ENCODE measurements at regions of chr1 and their contacts with region 1.

Region 1: GRCh38 chr1:107430540-107431228 is 289.8 kb downstream of the NTNG1 start:
- DNase-seq: no peak
- ATAC-seq: no peak
- H3K4me3 ChIP-seq: no peak overlapping the region
- H3K27ac ChIP-seq: no peak overlapping the region
- H3K4me1 ChIP-seq: no peaks in the 10 kb centered on the region
- H3K27me3 ChIP-seq: no peaks in the 10 kb centered on the region
- CTCF ChIP-seq: peak in 2 of 3 experiments; percentile 50 to 59; a peak in 4 of 6 replicates
- POLR2A ChIP-seq: no peak
- RAD21 ChIP-seq: no peak

Region 2: DNA sequence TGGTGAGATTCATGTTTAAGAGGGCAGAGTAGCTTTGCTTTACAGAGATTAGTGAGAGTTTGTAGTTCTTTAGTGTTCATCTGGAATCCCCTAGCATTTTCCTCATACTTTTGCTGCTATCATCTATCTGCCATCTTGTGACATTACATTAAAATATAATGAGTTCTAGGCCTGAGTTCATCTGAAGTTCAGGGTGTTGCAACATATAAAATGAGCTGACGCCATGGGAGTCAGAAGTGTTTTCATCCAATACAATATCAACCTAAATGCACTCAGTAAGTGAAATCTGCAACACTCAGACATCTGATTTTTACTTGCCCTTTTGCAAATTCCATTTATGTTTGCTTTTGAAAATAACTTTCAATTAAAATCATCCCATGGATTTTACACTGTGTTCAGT is 136.0 kb before region 1 on chr1:
- CTCF ChIA-PET with region 1: no interaction called
- POLR2A ChIA-PET with region 1: no interaction called
- RAD21 ChIA-PET with region 1: no interaction called
- intact Hi-C with region 1: no loop called
- DNase-seq: no peak
- ATAC-seq: no peak
- H3K4me3 ChIP-seq: no peak overlapping the region
- H3K27ac ChIP-seq: no peak overlapping the region
- H3K4me1 ChIP-seq: no peaks in the 10 kb centered on the region
- H3K27me3 ChIP-seq: no peaks in the 10 kb centered on the region
- CTCF ChIP-seq: no peak
- POLR2A ChIP-seq: no peak
- RAD21 ChIP-seq: no peak

Region 3: GRCh38 chr1:107750358-107750959 is 319.8 kb after region 1 on chr1:
- CTCF ChIA-PET with region 1: no interaction called
- POLR2A ChIA-PET with region 1: no interaction called
- RAD21 ChIA-PET with region 1: no interaction called
- intact Hi-C with region 1: loop called (anchors 2 kb)
- DNase-seq: peak; percentile 24
- ATAC-seq: no peak
- H3K4me3 ChIP-seq: no peak overlapping the region
- H3K27ac ChIP-seq: no peak overlapping the region
- H3K4me1 ChIP-seq: no peaks in the 10 kb centered on the region
- H3K27me3 ChIP-seq: no peaks in the 10 kb centered on the region
- CTCF ChIP-seq: peak; percentile 11 to 61 (median 61); a peak in 4 of 6 replicates
- POLR2A ChIP-seq: no peak
- RAD21 ChIP-seq: peak; percentile 34; the same call in 1 of the 2 replicates

Measured in HCT116 (cell line).